Right ventricle myocardium superior (tissue), 1 donor: ENCODE measurements at regions of chr18 and their contacts with region 1.

Region 1: GRCh38 chr18:63963615-63964256 is 6.1 kb upstream of the SERPINB8 start:
- DNase-seq: no peak
- ATAC-seq: peak; percentile 81

Region 2: DNA sequence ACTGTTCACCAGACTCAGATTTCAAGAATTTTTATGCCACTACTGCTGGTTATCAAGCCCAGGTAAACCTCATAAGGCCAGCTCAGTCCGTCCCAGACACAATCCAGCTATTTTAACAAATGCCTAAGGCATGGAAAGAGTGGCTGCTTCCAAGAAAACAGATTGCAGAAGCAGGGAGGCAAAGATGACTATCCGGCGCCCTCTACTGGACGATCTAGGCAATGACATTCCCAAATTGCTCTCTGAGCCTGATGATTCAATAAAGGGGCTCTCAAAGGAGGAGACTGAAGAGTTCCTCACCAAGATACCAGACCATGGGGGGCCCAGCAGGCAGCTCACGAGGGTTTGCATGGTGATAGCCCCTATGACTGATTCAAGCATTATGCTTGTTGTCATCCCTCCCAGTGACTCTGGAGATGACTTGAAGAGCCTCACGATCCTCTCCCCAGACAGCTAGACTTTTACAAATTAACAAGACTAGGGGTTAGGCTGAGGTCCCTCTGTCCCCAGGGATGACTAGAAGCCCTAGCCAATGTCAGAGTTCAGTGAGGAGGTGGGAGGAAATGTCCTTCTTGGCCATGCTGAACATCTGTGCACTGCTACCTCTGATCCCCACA is 31.2 kb after region 1 on chr18:
- intact Hi-C with region 1: loop called (anchors 5 kb)
- DNase-seq: peak; percentile 43
- ATAC-seq: peak; percentile 72

Region 3: GRCh38 chr18:64009305-64009704 is 45.6 kb after region 1 on chr18:
- intact Hi-C with region 1: no loop called
- DNase-seq: no peak
- ATAC-seq: no peak